AG04450 (cell line): ENCODE measurements at regions of chr1 and their contacts with region 1.

Region 1: GRCh38 chr1:212053993-212054392 is 18.4 kb downstream of the DTL start:
- DNase-seq: no peak
- H3K4me3 ChIP-seq: no peak overlapping the region
- H3K27ac ChIP-seq: no peak overlapping the region
- H3K27me3 ChIP-seq: no peaks in the 10 kb centered on the region
- CTCF ChIP-seq: no peak

Region 2: GRCh38 chr1:212110617-212111016 is 56.6 kb after region 1 on chr1:
- CTCF ChIA-PET with region 1: no interaction called
- POLR2A ChIA-PET with region 1: no interaction called
- DNase-seq: no peak
- H3K4me3 ChIP-seq: no peak overlapping the region
- H3K27ac ChIP-seq: no peak overlapping the region
- H3K27me3 ChIP-seq: no peaks in the 10 kb centered on the region
- CTCF ChIP-seq: no peak; the same call in 1 of the 2 replicates

Region 3: DNA sequence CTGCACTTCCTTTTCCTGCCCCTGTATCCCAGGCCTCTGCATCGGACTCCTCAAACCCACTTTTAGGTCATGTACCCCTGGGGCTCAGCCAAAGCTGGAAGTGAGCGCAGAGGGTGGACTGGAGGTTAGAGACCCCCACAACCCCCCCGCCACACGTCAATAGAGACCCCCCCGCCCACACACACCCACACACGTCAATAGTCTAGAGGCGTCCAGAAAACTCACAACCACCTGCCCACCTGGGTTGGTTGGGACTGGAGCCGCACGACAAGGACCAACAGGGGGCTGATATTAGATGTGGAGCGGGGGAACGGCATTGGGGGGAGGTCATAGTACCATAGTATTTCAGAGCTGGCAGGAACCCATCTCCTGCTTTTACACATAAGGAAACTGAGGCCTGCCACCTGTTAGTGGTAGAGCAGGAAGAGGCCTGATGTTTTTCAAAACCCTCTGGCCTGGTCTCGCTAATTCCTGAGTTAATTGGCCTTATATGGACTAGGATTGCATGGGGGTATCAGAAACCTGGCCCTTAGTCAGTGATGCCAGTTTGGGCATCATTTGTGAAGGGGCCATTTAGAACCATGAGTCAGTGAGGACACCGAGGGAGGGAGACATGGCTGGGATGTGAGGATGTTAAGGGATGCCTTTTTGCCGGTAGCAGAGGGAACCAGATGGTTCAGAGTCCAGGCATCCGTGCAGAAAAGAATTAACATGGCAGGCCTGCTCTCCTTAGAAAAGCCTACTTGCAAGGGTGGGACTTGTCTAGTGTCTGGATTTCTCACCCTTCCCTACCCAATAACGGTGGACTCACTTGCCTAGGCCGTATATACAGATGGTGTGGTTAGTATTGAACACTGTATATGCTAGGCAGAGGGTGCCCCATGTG is 379.8 kb after region 1 on chr1:
- CTCF ChIA-PET with region 1: interaction called, 12 read pairs
- POLR2A ChIA-PET with region 1: no interaction called
- DNase-seq: no peak
- H3K4me3 ChIP-seq: peak overlapping the region; percentile 72
- H3K27ac ChIP-seq: no peak overlapping the region
- H3K27me3 ChIP-seq: no peaks in the 10 kb centered on the region
- CTCF ChIP-seq: no peak